Vagina (tissue), 2 donors: ENCODE measurements at regions of chr20 and their contacts with region 1.

Region 1: GRCh38 chr20:9211016-9211760 is 142.3 kb downstream of the PLCB4 start:
- DNase-seq: no peak
- H3K4me3 ChIP-seq: no peak overlapping the region
- H3K27ac ChIP-seq: no peak overlapping the region
- H3K4me1 ChIP-seq: peaks cover 14% of the 10 kb centered on the region
- H3K27me3 ChIP-seq: no peaks in the 10 kb centered on the region
- CTCF ChIP-seq: no peak
- POLR2A ChIP-seq: no peak

Region 2: DNA sequence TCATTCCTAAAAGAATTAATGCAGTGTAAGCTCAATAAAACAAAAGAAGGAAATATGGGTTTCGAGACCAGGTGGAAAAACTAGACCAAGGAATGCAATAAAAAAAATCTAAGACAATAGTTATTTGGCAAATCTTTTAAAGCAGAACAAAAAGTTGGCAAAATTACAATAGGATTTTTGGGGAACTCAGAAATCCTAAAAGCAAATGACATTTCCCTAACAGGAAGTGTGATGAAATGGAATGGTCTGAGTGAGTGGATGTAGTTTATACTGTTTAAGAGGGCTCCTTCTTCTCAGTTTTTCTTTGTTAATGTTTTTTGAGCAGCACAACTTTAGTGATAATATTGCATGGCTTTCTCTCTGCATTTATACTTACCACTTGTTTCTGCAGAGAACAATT is 47.7 kb after region 1 on chr20:
- intact Hi-C with region 1: loop called (anchors 2 kb)
- DNase-seq: no peak
- H3K4me3 ChIP-seq: no peak overlapping the region
- H3K27ac ChIP-seq: no peak overlapping the region
- H3K4me1 ChIP-seq: peaks cover 6% of the 10 kb centered on the region
- H3K27me3 ChIP-seq: no peaks in the 10 kb centered on the region
- CTCF ChIP-seq: no peak
- POLR2A ChIP-seq: no peak